ENCODE measurements at regions of chr12 and their contacts with region 1.

Region 1: GRCh38 chr12:68040450-68041075 is 51.3 kb downstream of the IFNG-AS1 start:
- DNase-seq: peak; percentile 70
- H3K4me3 ChIP-seq: no peak overlapping the region
- H3K27ac ChIP-seq: no peak overlapping the region
- H3K4me1 ChIP-seq: no peaks in the 10 kb centered on the region
- H3K27me3 ChIP-seq: no peaks in the 10 kb centered on the region
- CTCF ChIP-seq: peak; percentile 70 to 86
- POLR2A ChIP-seq: no peak

Region 2: DNA sequence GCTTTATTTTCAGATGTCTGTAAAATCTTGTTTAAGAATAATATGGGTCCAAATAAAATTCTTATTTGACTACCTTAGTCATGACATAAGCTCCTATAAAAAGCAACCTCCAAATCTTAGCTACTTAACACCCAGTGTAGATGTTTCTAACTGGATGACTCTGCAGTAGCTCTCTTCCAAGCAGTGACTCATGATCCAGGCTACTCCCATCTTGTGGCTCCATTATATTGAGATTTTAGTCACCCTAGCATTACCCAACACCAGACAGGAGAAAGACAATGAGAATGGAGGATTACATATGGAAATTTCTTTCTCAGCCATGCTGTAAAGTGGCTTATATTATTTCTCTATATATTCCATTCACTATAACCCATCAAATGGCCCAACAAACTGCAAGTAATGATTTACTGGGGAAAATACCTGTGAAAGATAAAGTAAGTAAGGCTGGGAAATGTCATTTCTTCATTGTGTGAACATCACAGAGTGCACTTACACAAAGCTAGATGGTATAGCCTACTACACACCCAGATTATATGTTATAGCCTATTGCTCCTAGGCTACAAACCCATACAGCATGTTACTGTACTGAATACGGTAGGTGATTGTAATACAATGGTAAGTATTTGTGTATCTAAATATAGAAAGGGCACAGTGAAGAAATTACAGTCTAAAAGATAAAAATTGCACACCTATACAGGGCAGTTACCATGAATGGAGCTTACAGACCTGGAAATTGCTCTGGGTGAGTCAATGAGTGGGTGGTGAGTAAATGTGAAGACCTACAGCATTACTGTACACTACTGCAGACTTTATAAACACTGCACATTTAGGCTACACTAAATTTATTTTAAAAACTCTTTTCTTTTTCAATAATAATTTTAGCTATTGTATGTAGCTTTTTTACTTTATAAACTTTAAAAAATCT is 228.9 kb before region 1 on chr12:
- CTCF ChIA-PET with region 1: no interaction called
- POLR2A ChIA-PET with region 1: no interaction called
- dilution Hi-C with region 1: no loop called
- intact Hi-C with region 1: no loop called
- DNase-seq: no peak
- H3K4me3 ChIP-seq: no peak overlapping the region
- H3K27ac ChIP-seq: no peak overlapping the region
- H3K4me1 ChIP-seq: no peaks in the 10 kb centered on the region
- H3K27me3 ChIP-seq: no peaks in the 10 kb centered on the region
- CTCF ChIP-seq: no peak
- POLR2A ChIP-seq: no peak

Region 3: GRCh38 chr12:67943226-67943892 is 97.2 kb before region 1 on chr12:
- CTCF ChIA-PET with region 1: no interaction called
- POLR2A ChIA-PET with region 1: no interaction called
- dilution Hi-C with region 1: no loop called
- intact Hi-C with region 1: no loop called
- DNase-seq: peak; percentile 64
- H3K4me3 ChIP-seq: no peak overlapping the region
- H3K27ac ChIP-seq: no peak overlapping the region
- H3K4me1 ChIP-seq: no peaks in the 10 kb centered on the region
- H3K27me3 ChIP-seq: peaks cover 0 to 4% of the 10 kb centered on the region in 2 experiments
- CTCF ChIP-seq: peak; percentile 44 to 50
- POLR2A ChIP-seq: no peak

Region 4: DNA sequence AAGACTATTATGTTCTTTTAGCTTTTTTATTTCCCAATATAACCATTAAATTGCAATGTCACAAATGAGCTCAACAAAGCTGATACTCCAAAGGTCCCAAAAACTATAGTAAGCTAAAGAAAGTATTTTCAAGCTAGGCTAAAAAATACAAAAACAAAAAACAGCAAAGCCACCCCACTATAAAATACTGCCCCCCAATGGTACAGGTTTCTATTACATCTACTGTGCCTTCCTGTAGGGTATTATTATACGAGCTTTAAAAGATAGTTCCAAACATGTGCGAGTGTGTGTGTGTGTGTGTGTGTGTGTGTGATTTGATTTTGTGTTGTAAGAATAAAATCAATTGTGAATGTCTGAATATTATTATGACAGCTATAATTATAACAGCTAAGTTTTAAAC is 117.9 kb after region 1 on chr12:
- CTCF ChIA-PET with region 1: interaction called, 18 read pairs
- POLR2A ChIA-PET with region 1: no interaction called
- dilution Hi-C with region 1: no loop called
- intact Hi-C with region 1: no loop called
- DNase-seq: no peak
- H3K4me3 ChIP-seq: no peak overlapping the region
- H3K27ac ChIP-seq: no peak overlapping the region
- H3K4me1 ChIP-seq: no peaks in the 10 kb centered on the region
- H3K27me3 ChIP-seq: no peaks in the 10 kb centered on the region
- CTCF ChIP-seq: peak in 1 of 2 donors; percentile 1
- POLR2A ChIP-seq: no peak

Region 5: DNA sequence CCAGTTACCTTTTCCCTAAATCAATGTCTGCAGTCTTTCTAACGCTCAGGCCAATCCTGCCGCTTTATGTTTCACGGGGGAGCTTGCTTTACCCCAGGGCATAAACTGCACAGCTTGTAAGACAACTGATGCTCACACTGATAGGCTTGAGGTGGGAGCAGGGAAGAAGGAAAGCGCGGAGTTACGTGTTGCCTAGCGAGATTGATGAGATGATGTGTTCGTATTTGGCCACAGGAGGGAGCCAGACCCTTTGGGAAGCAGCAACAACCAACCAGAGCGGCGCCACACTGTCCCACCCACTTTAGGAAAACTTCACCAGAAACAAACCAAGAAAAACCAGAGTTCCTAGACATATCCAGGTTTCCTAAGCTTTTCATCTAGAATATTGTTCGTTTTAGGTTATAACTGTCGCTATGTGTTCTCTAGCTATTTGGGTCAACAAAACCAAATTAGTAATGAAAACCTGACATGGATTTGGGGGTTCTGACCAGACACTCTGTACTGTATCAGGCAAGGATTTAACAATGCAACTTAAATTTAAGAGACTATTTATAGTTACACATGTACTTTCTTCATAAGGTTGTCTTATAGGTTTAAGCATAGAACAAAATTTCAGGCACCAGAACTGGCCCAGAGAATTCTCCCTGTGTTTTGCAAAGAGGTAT is 182.7 kb after region 1 on chr12:
- CTCF ChIA-PET with region 1: interaction called, 4 read pairs
- POLR2A ChIA-PET with region 1: no interaction called
- dilution Hi-C with region 1: no loop called
- intact Hi-C with region 1: loop called (anchors 10 kb)
- DNase-seq: peak; percentile 88
- H3K4me3 ChIP-seq: no peak overlapping the region
- H3K27ac ChIP-seq: no peak overlapping the region
- H3K4me1 ChIP-seq: peaks cover 6% of the 10 kb centered on the region
- H3K27me3 ChIP-seq: peaks cover 0 to 2% of the 10 kb centered on the region in 2 experiments
- CTCF ChIP-seq: peak; percentile 84 to 86
- POLR2A ChIP-seq: no peak

Measured in endothelial cell of umbilical vein (primary cell).